PC-9 (cell line): ENCODE measurements at regions of chr14 and their contacts with region 1.

Region 1: GRCh38 chr14:74612350-74613021 is 449 bp upstream of the LTBP2 start:
- DNase-seq: peak; percentile 57 to 99
- H3K4me3 ChIP-seq: peak overlapping the region; percentile 76
- H3K27ac ChIP-seq: no peak overlapping the region
- H3K4me1 ChIP-seq: peaks cover 63% of the 10 kb centered on the region
- H3K27me3 ChIP-seq: no peaks in the 10 kb centered on the region
- CTCF ChIP-seq: peak; percentile 72

Region 2: DNA sequence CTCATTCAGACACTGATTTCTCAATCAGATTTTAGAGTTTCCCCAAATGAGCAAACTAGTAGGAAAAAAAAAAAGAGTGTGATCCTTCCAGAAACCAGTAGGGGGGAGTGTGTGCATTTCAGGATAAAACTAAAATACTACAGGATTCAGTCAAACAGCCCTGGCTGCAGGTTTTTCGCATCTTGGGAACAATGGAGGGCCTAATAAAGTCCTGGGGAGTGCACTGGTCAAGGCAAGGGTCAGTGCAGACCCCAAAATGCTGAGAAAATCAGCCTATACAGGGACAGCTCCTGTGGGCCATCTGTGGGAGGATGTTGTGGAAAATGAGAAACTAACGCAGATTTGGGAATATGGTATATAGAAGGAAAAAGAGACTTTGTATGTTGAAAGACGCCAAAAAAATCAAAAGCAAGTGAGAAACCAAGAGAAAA is 287.5 kb before region 1 on chr14:
- CTCF ChIA-PET with region 1: no interaction called
- POLR2A ChIA-PET with region 1: no interaction called
- intact Hi-C with region 1: loop called (anchors 10 kb)
- DNase-seq: peak in 1 of 2 experiments; percentile 39
- H3K4me3 ChIP-seq: no peak overlapping the region
- H3K27ac ChIP-seq: no peak overlapping the region
- H3K4me1 ChIP-seq: no peaks in the 10 kb centered on the region
- H3K27me3 ChIP-seq: no peaks in the 10 kb centered on the region
- CTCF ChIP-seq: peak; percentile 95

Region 3: DNA sequence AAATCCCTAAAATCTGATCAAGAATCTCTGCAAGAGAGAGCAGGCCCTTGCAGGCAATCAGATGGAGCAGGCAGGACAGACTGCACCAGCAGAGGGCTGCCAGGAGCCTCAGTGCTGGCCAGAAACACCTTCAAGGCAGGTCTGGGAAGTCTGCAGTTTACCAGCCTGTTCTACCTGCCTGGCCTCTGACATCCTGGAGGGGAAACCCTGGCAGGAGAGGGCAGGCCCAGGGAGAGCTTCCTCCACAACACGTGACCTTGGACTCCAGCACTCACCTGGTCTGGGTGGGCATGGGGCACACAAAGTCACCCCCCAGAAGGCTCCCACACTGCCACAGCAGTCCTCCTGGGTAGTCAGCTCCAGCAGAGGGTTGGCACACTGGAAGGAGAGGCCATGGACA is 62.9 kb before region 1 on chr14:
- CTCF ChIA-PET with region 1: interaction called, 13 read pairs
- POLR2A ChIA-PET with region 1: no interaction called
- intact Hi-C with region 1: loop called (anchors 1 kb)
- DNase-seq: peak; percentile 74 to 85
- H3K4me3 ChIP-seq: no peak overlapping the region
- H3K27ac ChIP-seq: peak overlapping the region; percentile 14
- H3K4me1 ChIP-seq: peaks cover 13% of the 10 kb centered on the region
- H3K27me3 ChIP-seq: no peaks in the 10 kb centered on the region
- CTCF ChIP-seq: peak; percentile 88

Region 4: DNA sequence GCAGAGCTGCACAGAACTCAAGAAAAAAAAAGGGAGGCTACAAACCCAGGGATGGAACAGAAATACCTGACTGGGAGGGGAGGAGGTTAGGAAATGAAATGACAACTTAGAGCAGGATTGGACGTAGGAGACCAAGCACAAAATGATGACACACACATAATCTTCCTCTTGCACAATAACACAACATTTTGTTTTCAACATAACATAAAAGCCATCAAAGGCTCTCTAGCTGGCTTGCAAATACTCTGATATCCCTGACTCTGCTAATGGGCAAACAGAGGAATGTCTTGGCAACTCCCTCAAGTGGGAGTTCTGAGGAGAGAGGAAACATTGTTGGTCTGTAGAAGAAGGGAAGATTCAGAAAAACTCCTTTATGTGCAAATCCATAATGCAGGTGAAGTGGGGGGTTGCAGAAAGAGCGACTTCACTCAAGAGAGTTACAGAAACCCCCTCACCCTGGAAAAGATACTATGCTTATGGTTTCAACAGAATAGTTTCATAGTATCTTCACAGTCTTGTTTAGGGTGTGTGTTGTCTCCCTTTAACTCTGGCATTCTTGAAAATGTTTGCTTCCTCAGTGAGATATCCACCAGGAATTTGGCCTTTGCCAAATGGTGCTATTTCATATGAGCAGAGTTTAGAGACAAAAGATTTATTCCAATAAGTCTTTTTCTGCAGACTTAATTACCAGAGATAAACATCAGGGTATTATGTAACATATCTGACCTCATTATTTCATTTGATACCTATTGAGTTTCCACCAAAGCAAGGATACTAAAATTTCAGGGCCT is 43.3 kb after region 1 on chr14:
- CTCF ChIA-PET with region 1: interaction called, 4 read pairs
- POLR2A ChIA-PET with region 1: interaction called, 6 read pairs
- intact Hi-C with region 1: loop called (anchors 1 kb)
- DNase-seq: peak; percentile 58 to 96
- H3K4me3 ChIP-seq: no peak overlapping the region
- H3K27ac ChIP-seq: peak overlapping the region; percentile 78
- H3K4me1 ChIP-seq: peaks cover 59% of the 10 kb centered on the region
- H3K27me3 ChIP-seq: no peaks in the 10 kb centered on the region
- CTCF ChIP-seq: no peak; the same call in 1 of the 2 replicates

Region 5: GRCh38 chr14:74784634-74785033 is 172.1 kb after region 1 on chr14:
- CTCF ChIA-PET with region 1: interaction called, 13 read pairs
- POLR2A ChIA-PET with region 1: no interaction called
- intact Hi-C with region 1: no loop called
- DNase-seq: no peak
- H3K4me3 ChIP-seq: no peak overlapping the region
- H3K27ac ChIP-seq: no peak overlapping the region
- H3K4me1 ChIP-seq: no peaks in the 10 kb centered on the region
- H3K27me3 ChIP-seq: no peaks in the 10 kb centered on the region
- CTCF ChIP-seq: no peak

Region 6: DNA sequence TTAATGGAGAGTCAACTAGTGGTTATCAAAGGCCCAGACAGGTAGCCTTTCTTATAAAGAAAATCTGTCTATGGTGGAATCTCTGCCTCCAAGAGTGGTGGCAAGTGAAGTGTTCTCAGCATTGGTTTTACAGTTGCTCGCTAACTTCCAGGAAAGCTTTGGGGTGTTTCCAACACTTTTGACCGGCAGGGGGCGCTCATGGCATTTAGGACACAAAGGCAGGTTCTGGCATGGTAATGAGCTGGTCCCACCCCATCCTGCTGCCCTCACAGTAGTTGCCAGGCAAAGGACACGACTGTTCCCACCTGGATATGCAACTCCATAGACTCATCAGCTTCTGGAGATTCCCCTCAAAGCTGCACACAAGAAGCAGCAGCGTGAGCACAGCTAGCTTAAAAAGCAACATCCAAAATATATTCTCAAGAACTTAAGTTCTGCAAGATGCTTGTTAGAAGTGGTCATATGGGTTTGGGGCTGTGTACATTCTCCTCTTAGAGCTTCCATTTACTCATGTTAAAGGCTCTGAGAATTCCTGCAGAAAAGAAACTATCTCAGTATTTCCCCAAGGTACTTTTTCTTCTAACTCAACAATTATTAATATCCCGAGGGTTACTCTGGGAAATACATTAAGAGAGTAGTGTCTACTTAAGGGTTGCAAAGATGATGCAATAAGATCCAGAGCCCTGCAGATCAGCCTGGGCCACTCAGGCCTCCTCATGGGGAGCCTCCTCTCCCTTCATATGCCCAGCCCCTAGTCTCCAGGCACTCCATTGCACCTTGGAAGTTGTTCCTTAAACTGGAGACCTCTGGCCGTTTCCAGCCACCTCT is 248.6 kb after region 1 on chr14:
- CTCF ChIA-PET with region 1: interaction called, 24 read pairs
- POLR2A ChIA-PET with region 1: no interaction called
- intact Hi-C with region 1: loop called (anchors 2 kb)
- DNase-seq: peak; percentile 73 to 96
- H3K4me3 ChIP-seq: no peak overlapping the region
- H3K27ac ChIP-seq: no peak overlapping the region
- H3K4me1 ChIP-seq: peaks cover 5% of the 10 kb centered on the region; the same call in 1 of the 2 replicates
- H3K27me3 ChIP-seq: no peaks in the 10 kb centered on the region
- CTCF ChIP-seq: peak; percentile 99

Region 7: GRCh38 chr14:75088574-75089373 is 476.3 kb after region 1 on chr14:
- CTCF ChIA-PET with region 1: no interaction called
- POLR2A ChIA-PET with region 1: no interaction called
- intact Hi-C with region 1: loop called (anchors 10 kb)
- DNase-seq: peak; percentile 59 to 67
- H3K4me3 ChIP-seq: no peak overlapping the region
- H3K27ac ChIP-seq: no peak overlapping the region
- H3K4me1 ChIP-seq: no peaks in the 10 kb centered on the region
- H3K27me3 ChIP-seq: no peaks in the 10 kb centered on the region
- CTCF ChIP-seq: peak; percentile 99

Region 8: GRCh38 chr14:76101377-76102010 is 1489.0 kb after region 1 on chr14:
- CTCF ChIA-PET with region 1: no interaction called
- POLR2A ChIA-PET with region 1: no interaction called
- intact Hi-C with region 1: no loop called
- DNase-seq: no peak
- H3K4me3 ChIP-seq: no peak overlapping the region
- H3K27ac ChIP-seq: no peak overlapping the region
- H3K4me1 ChIP-seq: no peaks in the 10 kb centered on the region
- H3K27me3 ChIP-seq: peaks cover 90% of the 10 kb centered on the region
- CTCF ChIP-seq: no peak